Endothelial cell of umbilical vein (primary cell): ENCODE measurements at regions of chr9 and their contacts with region 1.

Region 1: GRCh38 chr9:88781628-88782391 is 209.5 kb upstream of the S1PR3 start:
- DNase-seq: peak; percentile 70
- H3K4me3 ChIP-seq: no peak overlapping the region
- H3K27ac ChIP-seq: peak overlapping the region; percentile 28
- H3K4me1 ChIP-seq: peaks cover 31% of the 10 kb centered on the region
- H3K27me3 ChIP-seq: no peaks in the 10 kb centered on the region
- CTCF ChIP-seq: peak; percentile 50 to 71
- POLR2A ChIP-seq: no peak

Region 2: GRCh38 chr9:88722753-88723152 is 59.1 kb before region 1 on chr9:
- CTCF ChIA-PET with region 1: interaction called, 3 read pairs
- POLR2A ChIA-PET with region 1: no interaction called
- dilution Hi-C with region 1: no loop called
- intact Hi-C with region 1: loop called (anchors 1 kb)
- DNase-seq: peak; percentile 69
- H3K4me3 ChIP-seq: no peak overlapping the region
- H3K27ac ChIP-seq: no peak overlapping the region
- H3K4me1 ChIP-seq: peaks cover 3% of the 10 kb centered on the region
- H3K27me3 ChIP-seq: no peaks in the 10 kb centered on the region
- CTCF ChIP-seq: peak; percentile 40 to 56
- POLR2A ChIP-seq: no peak

Region 3: GRCh38 chr9:88794100-88794499 is 12.3 kb after region 1 on chr9:
- CTCF ChIA-PET with region 1: interaction called, 8 read pairs
- POLR2A ChIA-PET with region 1: no interaction called
- dilution Hi-C with region 1: no loop called
- intact Hi-C with region 1: loop called (anchors 1 kb)
- DNase-seq: peak; percentile 76
- H3K4me3 ChIP-seq: no peak overlapping the region
- H3K27ac ChIP-seq: no peak overlapping the region
- H3K4me1 ChIP-seq: peaks cover 18% of the 10 kb centered on the region
- H3K27me3 ChIP-seq: no peaks in the 10 kb centered on the region
- CTCF ChIP-seq: no peak
- POLR2A ChIP-seq: no peak

Region 4: GRCh38 chr9:88874383-88874782 is 92.6 kb after region 1 on chr9:
- CTCF ChIA-PET with region 1: no interaction called
- POLR2A ChIA-PET with region 1: no interaction called
- dilution Hi-C with region 1: no loop called
- intact Hi-C with region 1: no loop called
- DNase-seq: no peak
- H3K4me3 ChIP-seq: no peak overlapping the region
- H3K27ac ChIP-seq: no peak overlapping the region
- H3K4me1 ChIP-seq: no peaks in the 10 kb centered on the region
- H3K27me3 ChIP-seq: no peaks in the 10 kb centered on the region
- CTCF ChIP-seq: no peak
- POLR2A ChIP-seq: no peak

Region 5: GRCh38 chr9:88932766-88933165 is 151.0 kb after region 1 on chr9:
- CTCF ChIA-PET with region 1: interaction called, 10 read pairs
- POLR2A ChIA-PET with region 1: no interaction called
- dilution Hi-C with region 1: no loop called
- intact Hi-C with region 1: no loop called
- DNase-seq: no peak
- H3K4me3 ChIP-seq: no peak overlapping the region
- H3K27ac ChIP-seq: no peak overlapping the region
- H3K4me1 ChIP-seq: no peaks in the 10 kb centered on the region
- H3K27me3 ChIP-seq: no peaks in the 10 kb centered on the region
- CTCF ChIP-seq: no peak
- POLR2A ChIP-seq: no peak

Region 6: GRCh38 chr9:89154651-89155336 is 373.0 kb after region 1 on chr9:
- CTCF ChIA-PET with region 1: no interaction called
- POLR2A ChIA-PET with region 1: no interaction called
- dilution Hi-C with region 1: no loop called
- intact Hi-C with region 1: loop called (anchors 5 kb)
- DNase-seq: peak; percentile 85
- H3K4me3 ChIP-seq: no peak overlapping the region
- H3K27ac ChIP-seq: peak overlapping the region; percentile 96
- H3K4me1 ChIP-seq: peaks cover 24% of the 10 kb centered on the region
- H3K27me3 ChIP-seq: no peaks in the 10 kb centered on the region
- CTCF ChIP-seq: no peak
- POLR2A ChIP-seq: no peak